Calu3 (cell line): ENCODE measurements at regions of chr10 and their contacts with region 1.

Region 1: GRCh38 chr10:74502963-74503608 is 323.3 kb upstream of the KAT6B start:
- DNase-seq: no peak
- H3K4me3 Mint-ChIP-seq: peak overlapping the region; percentile 25
- H3K27ac Mint-ChIP-seq: peak overlapping the region; percentile 71
- H3K4me1 Mint-ChIP-seq: peaks cover 38% of the 10 kb centered on the region
- H3K27me3 Mint-ChIP-seq: no peaks in the 10 kb centered on the region
- CTCF ChIP-seq: no peak

Region 2: DNA sequence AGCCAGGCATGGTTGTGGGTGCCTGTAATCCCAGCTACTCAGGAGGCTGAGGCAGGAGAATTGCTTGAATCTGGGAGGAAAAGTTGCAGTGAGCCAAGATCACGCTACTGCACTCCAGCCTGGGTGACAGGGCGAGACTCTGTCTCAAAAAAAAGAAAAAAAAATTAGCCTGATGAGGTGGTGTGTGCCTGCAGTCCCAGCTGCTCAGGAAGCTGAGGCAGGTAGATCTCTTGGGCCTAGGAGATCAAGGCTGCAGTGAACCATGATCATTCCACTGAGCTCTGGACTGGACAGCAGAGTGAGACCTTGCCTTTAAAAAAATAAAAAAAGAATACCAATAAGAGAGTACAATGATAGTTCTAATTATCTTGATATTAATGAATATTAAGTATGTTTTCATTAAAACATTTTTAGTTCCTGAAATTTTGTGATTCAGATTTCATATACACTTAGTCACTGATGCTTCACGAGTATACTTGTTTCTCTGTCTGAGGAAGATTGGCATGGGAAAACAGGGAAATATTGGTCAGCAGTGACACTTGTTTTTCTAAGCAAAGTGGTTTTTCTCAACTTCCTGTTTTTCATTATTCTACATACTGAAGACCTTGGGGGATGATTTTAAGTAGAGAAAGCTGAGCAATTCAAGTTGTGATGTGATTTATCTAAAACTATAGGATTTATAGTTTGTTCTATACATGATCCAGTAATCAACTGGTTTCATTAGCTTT is 275.2 kb before region 1 on chr10:
- CTCF ChIA-PET with region 1: no interaction called
- intact Hi-C with region 1: no loop called
- DNase-seq: no peak
- H3K4me3 Mint-ChIP-seq: no peak overlapping the region
- H3K27ac Mint-ChIP-seq: peak overlapping the region; percentile 39
- H3K4me1 Mint-ChIP-seq: peaks cover 31% of the 10 kb centered on the region
- H3K27me3 Mint-ChIP-seq: no peaks in the 10 kb centered on the region
- CTCF ChIP-seq: no peak

Region 3: DNA sequence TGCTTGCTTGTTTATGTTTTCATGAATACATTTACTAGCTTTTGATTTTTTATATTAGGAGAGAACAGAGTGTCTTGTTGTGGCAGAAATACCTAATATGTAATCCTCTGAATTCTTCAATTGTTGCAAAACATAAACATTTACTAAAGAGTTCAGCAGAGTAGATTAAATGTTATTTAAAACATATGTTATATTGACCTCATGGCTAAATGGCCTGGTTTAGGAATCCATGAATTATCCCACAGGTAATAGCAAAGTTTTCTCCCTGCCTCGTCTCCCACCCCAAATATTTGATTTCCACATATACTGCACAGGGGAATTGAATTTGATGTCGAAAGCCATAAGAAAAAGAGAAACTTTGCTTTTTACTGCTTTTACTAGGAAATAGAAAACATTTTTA is 240.2 kb before region 1 on chr10:
- CTCF ChIA-PET with region 1: no interaction called
- intact Hi-C with region 1: loop called (anchors 5 kb)
- DNase-seq: no peak
- H3K4me3 Mint-ChIP-seq: no peak overlapping the region
- H3K27ac Mint-ChIP-seq: no peak overlapping the region
- H3K4me1 Mint-ChIP-seq: peaks cover 6% of the 10 kb centered on the region
- H3K27me3 Mint-ChIP-seq: no peaks in the 10 kb centered on the region
- CTCF ChIP-seq: no peak